Activated B cell treated with CpG ODN at 0.5 μM for 24 hours (primary cell): ENCODE measurements at regions of chr14 and their contacts with region 1.

Region 1: GRCh38 chr14:68685419-68686204 is 107.3 kb downstream of the ZFP36L1 start:
- DNase-seq: peak; percentile 65
- ATAC-seq: peak; percentile 76
- H3K4me3 Mint-ChIP-seq: peak overlapping the region; percentile 73
- H3K27ac Mint-ChIP-seq: peak overlapping the region; percentile 97
- H3K4me1 Mint-ChIP-seq: peaks cover 87% of the 10 kb centered on the region
- H3K27me3 Mint-ChIP-seq: no peaks in the 10 kb centered on the region
- CTCF ChIP-seq: no peak

Region 2: GRCh38 chr14:67532998-67533753 is 1152.4 kb before region 1 on chr14 and contains the start of gene PLEKHH1:
- CTCF ChIA-PET with region 1: no interaction called
- POLR2A ChIA-PET with region 1: no interaction called
- intact Hi-C with region 1: no loop called
- DNase-seq: peak; percentile 30
- ATAC-seq: peak; percentile 82
- H3K4me3 Mint-ChIP-seq: peak within 1 kb of the TSS; percentile 79
- H3K27ac Mint-ChIP-seq: no peak within 1 kb of the TSS
- H3K4me1 Mint-ChIP-seq: peaks cover 5% of the 10 kb centered on the region
- H3K27me3 Mint-ChIP-seq: peaks cover 33% of the 10 kb centered on the region
- CTCF ChIP-seq: no peak
- total RNA-seq, gene PLEKHH1: 0.20 and 0.61 TPM in 2 replicates

Region 3: DNA sequence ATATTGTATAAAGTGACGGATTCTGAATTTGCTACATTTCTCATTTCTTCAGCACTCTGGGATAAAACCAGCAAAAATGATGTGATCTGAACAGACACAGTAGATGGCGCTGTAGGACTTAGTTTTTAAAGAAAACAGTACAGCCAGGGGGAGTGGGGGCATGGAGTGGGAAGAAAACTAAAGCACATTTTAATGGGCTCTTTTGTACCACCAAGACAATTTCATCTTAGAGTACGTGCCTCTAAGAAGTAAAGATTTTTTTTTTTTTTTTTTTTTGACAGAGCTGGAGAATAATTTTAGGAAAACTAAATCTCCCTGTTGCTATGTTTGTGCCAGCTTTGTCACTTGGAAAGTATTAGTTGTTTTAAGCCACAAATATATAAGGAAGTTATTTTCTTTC is 741.7 kb before region 1 on chr14:
- CTCF ChIA-PET with region 1: interaction called, 5 read pairs
- POLR2A ChIA-PET with region 1: interaction called, 11 read pairs
- intact Hi-C with region 1: no loop called
- DNase-seq: no peak
- ATAC-seq: peak; percentile 54
- H3K4me3 Mint-ChIP-seq: no peak overlapping the region
- H3K27ac Mint-ChIP-seq: no peak overlapping the region
- H3K4me1 Mint-ChIP-seq: peaks cover 8% of the 10 kb centered on the region
- H3K27me3 Mint-ChIP-seq: no peaks in the 10 kb centered on the region
- CTCF ChIP-seq: no peak

Region 4: GRCh38 chr14:68274725-68275124 is 410.9 kb before region 1 on chr14:
- CTCF ChIA-PET with region 1: no interaction called
- POLR2A ChIA-PET with region 1: interaction called, 22 read pairs
- intact Hi-C with region 1: no loop called
- DNase-seq: no peak
- ATAC-seq: no peak
- H3K4me3 Mint-ChIP-seq: peak overlapping the region; percentile 65
- H3K27ac Mint-ChIP-seq: peak overlapping the region; percentile 99
- H3K4me1 Mint-ChIP-seq: peaks cover 93% of the 10 kb centered on the region
- H3K27me3 Mint-ChIP-seq: no peaks in the 10 kb centered on the region
- CTCF ChIP-seq: no peak

Region 5: GRCh38 chr14:68476212-68476907 is 209.3 kb before region 1 on chr14:
- CTCF ChIA-PET with region 1: no interaction called
- POLR2A ChIA-PET with region 1: interaction called, 19 read pairs
- intact Hi-C with region 1: loop called (anchors 1 kb)
- DNase-seq: peak; percentile 40
- ATAC-seq: peak; percentile 83
- H3K4me3 Mint-ChIP-seq: peak overlapping the region; percentile 62
- H3K27ac Mint-ChIP-seq: peak overlapping the region; percentile 99
- H3K4me1 Mint-ChIP-seq: peaks cover 89% of the 10 kb centered on the region
- H3K27me3 Mint-ChIP-seq: no peaks in the 10 kb centered on the region
- CTCF ChIP-seq: no peak

Region 6: GRCh38 chr14:68513838-68514620 is 171.6 kb before region 1 on chr14:
- CTCF ChIA-PET with region 1: no interaction called
- POLR2A ChIA-PET with region 1: interaction called, 24 read pairs
- intact Hi-C with region 1: no loop called
- DNase-seq: no peak
- ATAC-seq: peak; percentile 84
- H3K4me3 Mint-ChIP-seq: peak overlapping the region; percentile 64
- H3K27ac Mint-ChIP-seq: peak overlapping the region; percentile 94
- H3K4me1 Mint-ChIP-seq: peaks cover 66% of the 10 kb centered on the region
- H3K27me3 Mint-ChIP-seq: no peaks in the 10 kb centered on the region
- CTCF ChIP-seq: no peak

Region 7: GRCh38 chr14:68599896-68600612 is 85.6 kb before region 1 on chr14:
- CTCF ChIA-PET with region 1: no interaction called
- POLR2A ChIA-PET with region 1: no interaction called
- intact Hi-C with region 1: no loop called
- DNase-seq: no peak
- ATAC-seq: no peak
- H3K4me3 Mint-ChIP-seq: no peak overlapping the region
- H3K27ac Mint-ChIP-seq: no peak overlapping the region
- H3K4me1 Mint-ChIP-seq: peaks cover 2% of the 10 kb centered on the region
- H3K27me3 Mint-ChIP-seq: no peaks in the 10 kb centered on the region
- CTCF ChIP-seq: no peak

Region 8: DNA sequence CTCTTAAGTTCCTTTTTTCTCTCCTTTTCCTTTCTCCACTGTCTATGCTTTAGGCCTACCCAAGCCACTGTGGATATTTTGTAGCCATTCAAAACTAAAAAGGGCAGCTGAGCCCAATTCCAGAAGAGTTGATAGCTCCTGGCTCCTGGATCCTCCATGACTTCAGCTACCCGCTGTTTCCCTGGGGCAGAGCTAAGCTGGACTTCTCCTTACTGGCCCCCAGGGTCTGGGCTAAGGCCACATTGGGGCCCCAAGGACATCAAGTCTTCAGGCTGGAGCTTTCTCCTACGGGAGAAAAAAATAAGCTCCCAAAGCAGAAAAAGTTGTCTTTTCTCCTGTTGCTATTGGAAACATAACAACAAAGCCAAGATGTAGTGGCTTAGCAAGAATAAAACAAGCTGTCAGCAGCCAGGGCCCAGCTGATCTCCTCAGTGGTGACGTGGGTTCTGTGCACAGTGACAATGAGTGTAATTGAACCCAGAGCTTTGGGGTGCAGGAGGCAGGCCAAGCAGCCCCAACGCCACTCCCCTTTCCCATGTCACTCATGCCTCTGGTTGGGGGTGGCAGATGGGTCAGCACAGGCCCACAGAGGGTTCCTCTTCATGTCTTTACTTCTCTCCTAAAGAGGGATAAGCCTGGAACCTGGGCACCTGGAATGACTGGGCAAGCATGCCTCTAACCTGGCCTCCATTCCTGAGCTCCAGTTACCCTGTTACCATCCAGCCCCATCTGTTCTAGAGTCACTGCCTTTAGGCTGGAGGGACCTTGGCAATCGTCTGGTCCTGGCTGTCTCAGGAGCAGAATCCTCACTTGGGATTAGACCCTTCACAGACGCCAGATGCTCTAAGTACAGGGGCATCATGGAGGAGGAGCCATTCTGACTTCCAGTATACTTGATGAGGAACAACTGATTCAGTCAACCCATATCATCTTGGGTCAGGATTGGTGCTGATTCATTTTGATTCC is 63.9 kb before region 1 on chr14:
- CTCF ChIA-PET with region 1: no interaction called
- POLR2A ChIA-PET with region 1: no interaction called
- intact Hi-C with region 1: no loop called
- DNase-seq: no peak
- ATAC-seq: no peak
- H3K4me3 Mint-ChIP-seq: no peak overlapping the region
- H3K27ac Mint-ChIP-seq: no peak overlapping the region
- H3K4me1 Mint-ChIP-seq: peaks cover 8% of the 10 kb centered on the region
- H3K27me3 Mint-ChIP-seq: no peaks in the 10 kb centered on the region
- CTCF ChIP-seq: no peak

Region 9: DNA sequence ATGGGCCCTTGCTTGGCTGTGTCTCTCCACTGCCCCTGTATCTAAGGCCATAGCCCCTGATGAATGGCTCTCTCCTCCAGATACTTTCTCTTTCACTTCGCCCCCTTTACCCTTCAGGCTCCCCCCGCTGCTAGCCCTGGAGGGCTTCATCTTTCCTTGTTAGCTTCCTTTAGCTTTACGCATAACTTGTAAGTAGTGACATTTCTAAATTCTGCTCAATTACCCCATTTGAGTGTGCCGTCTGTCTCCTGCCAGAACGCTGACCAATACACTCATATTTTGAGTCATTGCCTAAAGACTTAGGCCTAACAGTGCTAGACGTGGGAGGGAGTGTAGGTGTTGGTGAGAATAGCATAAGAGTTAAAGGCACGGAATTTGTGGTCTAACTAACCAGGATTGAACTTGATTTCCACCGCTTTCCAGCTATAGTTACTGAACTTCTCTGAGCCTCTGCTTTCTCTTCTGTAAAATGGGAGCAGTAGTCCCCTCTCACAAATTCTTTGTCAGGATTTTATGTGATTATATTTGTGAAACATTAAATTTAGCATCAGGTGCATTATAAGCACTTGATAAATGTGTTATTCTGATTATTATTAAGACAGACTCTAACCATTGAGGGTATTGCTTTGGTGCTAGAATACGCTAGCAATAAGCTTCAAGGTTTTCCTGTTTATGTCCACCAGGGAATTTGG is 22.1 kb before region 1 on chr14:
- CTCF ChIA-PET with region 1: no interaction called
- POLR2A ChIA-PET with region 1: interaction called, 12 read pairs
- intact Hi-C with region 1: no loop called
- DNase-seq: no peak
- ATAC-seq: peak; percentile 79
- H3K4me3 Mint-ChIP-seq: peak overlapping the region; percentile 76
- H3K27ac Mint-ChIP-seq: peak overlapping the region; percentile 74
- H3K4me1 Mint-ChIP-seq: peaks cover 52% of the 10 kb centered on the region
- H3K27me3 Mint-ChIP-seq: no peaks in the 10 kb centered on the region
- CTCF ChIP-seq: no peak

Region 10: DNA sequence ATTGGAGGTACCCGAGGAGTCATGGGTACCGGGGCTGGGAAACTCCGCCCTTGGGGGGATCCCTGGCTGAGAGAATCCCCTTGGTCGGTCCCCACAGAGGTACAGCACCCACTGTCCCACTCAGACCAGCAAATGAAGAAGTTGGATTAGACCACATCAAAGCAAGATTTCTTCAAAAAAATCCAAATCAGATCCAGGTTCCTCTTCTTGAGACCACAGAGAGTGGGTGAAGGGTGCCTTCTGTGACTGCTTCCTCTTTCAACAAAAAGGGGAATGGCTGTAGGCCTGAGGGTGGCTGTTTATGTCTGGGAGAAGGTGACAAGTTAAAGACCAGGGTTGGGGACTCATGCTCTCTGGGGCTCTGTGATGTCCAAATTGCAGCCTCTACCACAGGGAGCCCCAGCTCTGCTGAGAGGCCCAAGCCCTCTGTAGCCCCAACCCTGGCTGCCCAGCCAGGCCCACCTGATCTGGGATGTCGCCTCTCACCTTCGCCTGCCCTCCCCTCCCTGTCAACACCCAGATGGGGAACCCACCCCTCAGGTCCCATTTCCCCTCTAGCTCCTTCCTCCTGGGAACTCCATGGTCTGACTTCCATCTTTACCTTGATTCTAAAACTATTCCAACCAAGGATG is 56.3 kb after region 1 on chr14:
- CTCF ChIA-PET with region 1: no interaction called
- POLR2A ChIA-PET with region 1: interaction called, 4 read pairs
- intact Hi-C with region 1: loop called (anchors 1 kb)
- DNase-seq: peak; percentile 65
- ATAC-seq: peak; percentile 89
- H3K4me3 Mint-ChIP-seq: peak overlapping the region; percentile 32
- H3K27ac Mint-ChIP-seq: peak overlapping the region; percentile 86
- H3K4me1 Mint-ChIP-seq: peaks cover 54% of the 10 kb centered on the region
- H3K27me3 Mint-ChIP-seq: no peaks in the 10 kb centered on the region
- CTCF ChIP-seq: no peak